Activated CD4-positive, alpha-beta T cell treated with anti-CD3 and anti-CD28 coated beads, Interleukin-2, amount 10 ng/mL, durations not matched to agents 24 days and 14 days (primary cell): ENCODE measurements at regions of chr12 and their contacts with region 1.

Region 1: DNA sequence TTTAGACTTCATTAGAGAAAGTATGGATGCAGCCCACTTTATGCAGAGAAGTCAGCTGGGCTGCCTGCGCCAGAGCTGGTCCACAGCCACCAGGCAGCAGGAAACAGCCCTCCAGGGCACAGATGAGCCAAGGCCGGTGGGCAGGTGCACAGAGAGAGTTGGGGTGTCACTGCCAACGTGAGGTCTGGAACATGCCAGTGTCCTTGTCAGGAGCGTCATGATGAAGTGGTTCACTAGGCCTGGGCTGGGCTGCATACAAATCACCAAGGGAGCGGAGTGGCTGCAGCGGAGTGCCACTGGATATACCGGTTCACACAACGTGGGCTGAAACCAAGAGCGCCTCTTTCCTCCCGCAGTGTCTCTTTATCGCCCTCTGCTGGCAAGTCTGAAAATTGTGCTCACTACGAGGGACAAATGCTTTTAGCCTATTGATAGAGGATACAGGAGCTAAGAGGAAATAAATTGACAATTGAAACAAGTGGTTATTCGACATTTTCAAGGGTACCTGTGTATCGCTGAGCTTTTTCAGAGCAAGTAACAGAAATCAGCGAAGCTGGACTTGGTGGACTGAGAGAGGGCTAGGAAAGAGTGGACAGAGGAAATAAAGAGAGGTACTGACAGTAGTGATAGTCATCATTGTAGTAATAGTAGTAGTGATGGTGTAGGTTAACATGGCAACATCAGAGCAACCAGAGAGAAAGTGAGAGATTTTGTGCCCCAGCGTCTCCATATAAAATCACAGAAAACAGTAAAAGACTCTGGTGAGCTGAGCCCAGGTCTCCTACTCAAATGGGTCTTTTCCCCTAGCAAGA is 52.0 kb upstream of the ITPR2 start:
- DNase-seq: peak; percentile 96
- H3K4me3 Mint-ChIP-seq: peak overlapping the region; percentile 61
- H3K27ac Mint-ChIP-seq: no peak overlapping the region
- H3K4me1 Mint-ChIP-seq: peaks cover 13% of the 10 kb centered on the region
- H3K27me3 Mint-ChIP-seq: peaks cover 19% of the 10 kb centered on the region

Region 2: DNA sequence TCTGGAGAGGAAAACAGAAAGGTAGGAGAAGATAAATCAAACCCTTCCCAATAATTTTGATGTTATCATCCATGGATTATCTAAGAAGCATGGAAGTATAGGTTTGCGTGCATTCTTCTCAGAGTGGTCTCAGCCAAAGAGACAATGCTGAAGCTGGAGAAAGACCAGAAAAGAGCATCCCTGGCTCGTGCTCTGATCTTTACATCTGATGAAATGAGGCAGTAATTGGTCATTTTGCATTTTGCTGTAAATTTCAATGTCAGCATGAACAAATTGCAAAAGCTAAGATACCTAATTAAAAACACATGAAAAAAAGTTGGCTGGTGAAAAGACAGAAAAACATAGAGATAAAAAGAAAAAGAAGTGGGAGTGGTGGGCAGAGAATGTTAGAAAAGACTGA is 304.4 kb before region 1 on chr12:
- intact Hi-C with region 1: no loop called
- DNase-seq: no peak
- H3K4me3 Mint-ChIP-seq: no peak overlapping the region
- H3K27ac Mint-ChIP-seq: no peak overlapping the region
- H3K4me1 Mint-ChIP-seq: peaks cover 9% of the 10 kb centered on the region
- H3K27me3 Mint-ChIP-seq: no peaks in the 10 kb centered on the region

Region 3: DNA sequence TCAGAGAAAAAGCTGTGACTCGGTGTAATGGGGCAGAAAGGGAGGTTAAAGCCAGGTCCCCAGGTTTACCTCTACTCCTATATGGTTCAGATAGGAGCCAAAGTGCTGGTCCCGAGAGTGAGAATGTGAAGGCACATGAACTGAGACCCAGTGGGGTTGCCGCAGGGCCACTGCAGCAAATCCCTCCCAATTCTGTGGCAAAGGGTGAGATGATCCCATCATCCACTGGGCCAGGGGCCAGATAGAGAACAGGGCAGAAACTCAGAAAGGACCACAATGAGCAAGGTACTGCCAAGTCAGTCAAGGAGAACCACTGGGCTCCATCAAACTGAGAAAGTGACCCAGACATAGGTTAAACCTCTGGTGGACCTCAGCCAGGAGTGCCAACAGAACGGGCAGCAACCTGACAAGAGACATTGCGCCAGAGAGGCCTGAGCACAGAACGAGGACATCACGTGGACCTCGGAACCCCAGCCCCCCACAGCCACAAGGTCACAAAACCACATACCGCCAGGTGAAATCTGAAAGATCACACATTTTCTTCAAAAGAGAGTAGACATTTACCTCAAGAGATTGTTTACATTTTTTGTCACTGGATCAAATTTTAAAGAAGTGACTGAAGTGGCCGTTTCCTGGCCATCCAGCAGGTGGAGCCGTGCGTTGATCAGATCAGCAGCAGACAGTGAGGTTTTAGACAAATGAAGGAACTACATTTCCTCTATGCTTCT is 31.5 kb before region 1 on chr12:
- intact Hi-C with region 1: loop called (anchors 1 kb)
- DNase-seq: peak; percentile 90
- H3K4me3 Mint-ChIP-seq: no peak overlapping the region
- H3K27ac Mint-ChIP-seq: no peak overlapping the region
- H3K4me1 Mint-ChIP-seq: no peaks in the 10 kb centered on the region
- H3K27me3 Mint-ChIP-seq: peaks cover 10% of the 10 kb centered on the region

Region 4: GRCh38 chr12:27123642-27124041 is 238.7 kb after region 1 on chr12:
- intact Hi-C with region 1: no loop called
- DNase-seq: no peak
- H3K4me3 Mint-ChIP-seq: no peak overlapping the region
- H3K27ac Mint-ChIP-seq: no peak overlapping the region
- H3K4me1 Mint-ChIP-seq: no peaks in the 10 kb centered on the region
- H3K27me3 Mint-ChIP-seq: peaks cover 3% of the 10 kb centered on the region

Region 5: DNA sequence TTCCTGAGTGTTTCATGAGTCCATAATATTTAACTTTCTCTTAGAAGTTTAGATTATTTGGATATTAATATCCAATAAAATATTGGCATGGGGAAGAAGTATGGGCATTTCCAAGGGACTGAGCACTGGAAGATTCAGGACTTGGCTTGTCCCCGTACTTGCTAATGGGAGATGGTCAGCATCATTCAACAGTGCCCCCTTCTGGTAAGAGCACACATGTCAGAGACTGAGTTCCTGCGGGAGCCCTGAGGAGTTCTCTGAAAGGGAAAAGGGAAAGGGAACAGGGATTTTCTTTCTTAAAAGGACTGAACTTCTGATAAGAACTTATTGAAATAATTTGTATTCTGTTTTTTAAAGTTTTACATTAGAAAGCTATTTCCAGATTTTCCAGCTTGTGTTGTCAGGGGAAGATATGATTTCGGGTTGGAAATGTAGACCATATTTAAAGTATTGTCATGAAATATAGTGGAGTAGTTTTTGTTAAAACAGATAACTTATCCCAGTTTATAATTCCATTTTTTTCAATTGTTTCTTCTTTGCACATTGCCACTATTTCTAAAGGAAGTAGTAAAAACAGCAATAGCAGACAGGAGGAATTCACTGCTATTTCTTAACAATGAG is 257.2 kb after region 1 on chr12:
- intact Hi-C with region 1: no loop called
- DNase-seq: peak; percentile 81
- H3K4me3 Mint-ChIP-seq: no peak overlapping the region
- H3K27ac Mint-ChIP-seq: peak overlapping the region; percentile 1
- H3K4me1 Mint-ChIP-seq: peaks cover 17% of the 10 kb centered on the region
- H3K27me3 Mint-ChIP-seq: peaks cover 2% of the 10 kb centered on the region